ENCODE measurements at regions of chr1 and their contacts with region 1.

Region 1: DNA sequence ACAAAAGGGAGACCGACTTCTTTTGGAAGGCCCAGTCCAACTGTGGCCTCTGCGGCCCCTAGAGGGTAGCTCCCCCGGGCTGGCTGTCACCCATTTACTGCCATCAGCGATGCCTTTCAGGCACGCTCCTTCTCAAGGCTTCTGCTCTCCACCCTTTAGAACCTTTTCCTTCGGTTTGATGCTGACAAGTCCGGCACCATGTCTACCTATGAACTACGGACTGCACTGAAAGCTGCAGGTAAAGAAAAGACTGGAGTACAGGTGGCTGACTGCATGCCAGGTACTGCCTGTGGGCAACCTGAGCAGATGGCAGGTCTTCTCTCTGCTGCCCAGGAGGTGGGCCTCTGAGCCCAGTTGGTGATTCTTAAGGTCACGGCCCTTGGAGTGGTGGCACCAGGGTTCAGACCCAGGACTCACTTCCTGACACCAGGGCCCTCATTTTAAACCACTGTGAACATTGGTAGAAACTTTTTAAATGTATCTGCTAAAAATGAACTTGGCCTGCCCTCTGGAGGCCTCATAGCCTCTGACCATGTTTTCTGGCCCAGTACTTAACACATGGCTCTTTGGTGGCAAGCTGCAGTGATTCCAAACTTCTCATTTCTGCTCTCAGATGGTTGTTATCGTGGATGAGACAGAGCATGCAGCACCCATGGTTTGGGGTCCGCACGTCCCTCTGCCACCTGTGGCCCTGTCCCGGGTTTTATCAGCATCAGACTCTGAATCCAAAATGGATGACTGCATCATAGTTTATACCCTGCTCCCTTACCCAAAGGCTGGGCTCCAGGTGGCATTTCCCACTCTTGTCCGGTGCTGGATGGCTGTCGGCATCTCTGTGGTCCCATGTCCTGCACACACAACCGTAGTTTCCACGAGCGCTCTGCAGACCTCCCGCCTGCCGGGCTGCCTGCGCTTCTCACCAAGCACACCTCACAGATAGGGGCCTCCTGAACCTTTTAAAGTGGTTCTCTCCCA is 45.8 kb downstream of the CAPN9 start:
- DNase-seq: no peak
- ATAC-seq: no peak
- H3K4me3 ChIP-seq: no peak overlapping the region
- H3K27ac ChIP-seq: no peak overlapping the region
- H3K4me1 ChIP-seq: no peaks in the 10 kb centered on the region
- H3K27me3 ChIP-seq: no peaks in the 10 kb centered on the region
- CTCF ChIP-seq: no peak
- POLR2A ChIP-seq: no peak

Region 2: DNA sequence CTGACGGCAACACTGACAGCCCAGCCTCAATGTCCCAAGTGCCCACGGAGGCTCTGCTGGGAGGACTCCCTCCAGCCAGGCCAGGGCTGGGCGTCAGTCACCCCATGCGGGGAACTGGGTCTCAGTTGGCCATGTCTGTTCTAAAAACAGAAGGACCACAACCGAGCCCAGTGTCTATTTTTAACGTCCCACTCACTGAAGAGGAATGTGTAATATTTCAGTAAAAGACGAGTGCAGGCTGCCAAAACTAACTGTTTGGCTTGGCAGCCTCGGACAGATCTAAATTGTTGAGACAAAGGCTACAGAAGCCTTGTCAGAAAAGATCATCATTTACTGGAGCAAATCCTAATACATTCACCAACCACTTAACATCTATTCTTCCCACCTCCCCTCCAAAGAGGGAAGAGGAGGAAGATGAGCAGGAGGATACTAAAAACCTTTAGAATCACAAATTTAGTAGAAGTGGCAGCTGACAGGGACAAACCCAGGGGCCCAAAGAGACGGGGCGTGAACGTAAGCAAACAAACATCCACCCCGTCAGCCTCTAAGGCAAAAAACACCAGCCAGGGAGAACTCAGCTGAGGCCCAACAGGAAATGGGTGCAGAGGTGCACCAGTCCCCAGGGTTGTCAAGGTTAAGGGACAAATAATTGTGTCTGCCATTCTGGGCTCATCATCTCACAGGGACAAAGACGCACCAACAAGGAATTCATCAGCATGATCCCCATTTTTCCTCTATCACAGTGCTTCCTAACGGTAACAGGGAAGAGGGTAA is 56.7 kb after region 1 on chr1:
- intact Hi-C with region 1: no loop called
- DNase-seq: peak; percentile 80 to 85 (median 82)
- ATAC-seq: peak; percentile 91 to 94 (median 93)
- H3K4me3 ChIP-seq: peak overlapping the region in 1 of 12 donors; percentile 2
- H3K27ac ChIP-seq: peak overlapping the region; percentile 74 to 92 (median 80)
- H3K4me1 ChIP-seq: peaks cover 4 to 70% (median 50%) of the 10 kb centered on the region in 12 donors
- H3K27me3 ChIP-seq: no peaks in the 10 kb centered on the region
- CTCF ChIP-seq: no peak
- POLR2A ChIP-seq: no peak

Region 3: GRCh38 chr1:231219422-231220401 is 426.7 kb after region 1 on chr1:
- intact Hi-C with region 1: loop called in 7 of 10 experiments (anchors 5 kb)
- DNase-seq: no peak
- ATAC-seq: no peak
- H3K4me3 ChIP-seq: no peak overlapping the region
- H3K27ac ChIP-seq: no peak overlapping the region
- H3K4me1 ChIP-seq: no peaks in the 10 kb centered on the region
- H3K27me3 ChIP-seq: peaks cover 0 to 12% (median 0%) of the 10 kb centered on the region in 9 donors
- CTCF ChIP-seq: no peak
- POLR2A ChIP-seq: no peak